ENCODE measurements at regions of chr1 and their contacts with region 1.

Region 1: DNA sequence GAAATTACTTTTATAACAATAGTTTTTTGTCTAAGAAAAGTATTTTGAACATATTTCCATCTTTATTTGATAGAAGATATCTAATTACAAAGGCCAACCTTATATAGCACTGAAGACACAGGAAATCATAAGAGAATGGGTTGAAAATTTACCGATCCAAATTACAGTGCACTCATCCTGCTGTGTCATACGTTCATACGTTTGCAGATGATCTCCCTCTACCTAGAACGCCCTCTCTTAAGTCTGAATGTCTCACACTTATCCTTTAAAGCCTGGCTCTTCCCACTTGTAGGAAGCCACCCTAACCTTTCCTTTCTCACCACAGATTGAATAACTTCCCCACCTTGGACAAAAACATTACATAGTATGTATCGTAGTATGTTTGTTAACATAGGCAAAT is 9.3 kb downstream of the ASH1L start:
- DNase-seq: no peak
- ATAC-seq: no peak
- H3K4me3 ChIP-seq: no peak overlapping the region
- H3K4me3 Mint-ChIP-seq: peak overlapping the region in 8 of 10 donors; percentile 6 to 65 (median 48)
- H3K27ac ChIP-seq: no peak overlapping the region
- H3K27ac Mint-ChIP-seq: peak overlapping the region in 7 of 9 donors; percentile 5 to 81 (median 75)
- H3K4me1 ChIP-seq: peaks cover 12 to 30% of the 10 kb centered on the region in 2 donors
- H3K4me1 Mint-ChIP-seq: peaks cover 24 to 74% (median 54%) of the 10 kb centered on the region in 7 donors
- H3K27me3 ChIP-seq: no peaks in the 10 kb centered on the region
- H3K27me3 Mint-ChIP-seq: no peaks in the 10 kb centered on the region

Region 2: GRCh38 chr1:155540000-155540874 is 13.1 kb before region 1 on chr1:
- CTCF ChIA-PET with region 1: no interaction called
- POLR2A ChIA-PET with region 1: interaction called, 3 read pairs
- intact Hi-C with region 1: loop called in 1 of 2 experiments (anchors 2 kb)
- DNase-seq: no peak
- ATAC-seq: peak; percentile 27
- H3K4me3 ChIP-seq: no peak overlapping the region
- H3K4me3 Mint-ChIP-seq: peak overlapping the region in 7 of 10 donors; percentile 15 to 76 (median 46)
- H3K27ac ChIP-seq: peak overlapping the region; percentile 61
- H3K27ac Mint-ChIP-seq: peak overlapping the region; percentile 60 to 93 (median 81)
- H3K4me1 ChIP-seq: peaks cover 26 to 30% of the 10 kb centered on the region in 2 donors
- H3K4me1 Mint-ChIP-seq: peaks cover 40 to 65% (median 52%) of the 10 kb centered on the region in 7 donors
- H3K27me3 ChIP-seq: no peaks in the 10 kb centered on the region
- H3K27me3 Mint-ChIP-seq: no peaks in the 10 kb centered on the region